Endothelial cell of umbilical vein (primary cell): ENCODE measurements at regions of chr19 and their contacts with region 1.

Region 1: GRCh38 chr19:12610540-12611360 is at the starts of genes ZNF490 and ZNF791:
- DNase-seq: peak; percentile 97
- H3K4me3 ChIP-seq: peak within 1 kb of the TSS; percentile 83 to 97 (median 91)
- H3K27ac ChIP-seq: peak within 1 kb of the TSS; percentile 91
- H3K4me1 ChIP-seq: peaks cover 13% of the 10 kb centered on the region
- H3K27me3 ChIP-seq: no peaks in the 10 kb centered on the region
- CTCF ChIP-seq: peak; percentile 6 to 22
- POLR2A ChIP-seq: peak; percentile 74
- total RNA-seq, gene ZNF490: 5.7 and 6.3 TPM in 2 replicates
- total RNA-seq, gene ZNF791: 19.9 and 21.8 TPM in 2 replicates

Region 2: DNA sequence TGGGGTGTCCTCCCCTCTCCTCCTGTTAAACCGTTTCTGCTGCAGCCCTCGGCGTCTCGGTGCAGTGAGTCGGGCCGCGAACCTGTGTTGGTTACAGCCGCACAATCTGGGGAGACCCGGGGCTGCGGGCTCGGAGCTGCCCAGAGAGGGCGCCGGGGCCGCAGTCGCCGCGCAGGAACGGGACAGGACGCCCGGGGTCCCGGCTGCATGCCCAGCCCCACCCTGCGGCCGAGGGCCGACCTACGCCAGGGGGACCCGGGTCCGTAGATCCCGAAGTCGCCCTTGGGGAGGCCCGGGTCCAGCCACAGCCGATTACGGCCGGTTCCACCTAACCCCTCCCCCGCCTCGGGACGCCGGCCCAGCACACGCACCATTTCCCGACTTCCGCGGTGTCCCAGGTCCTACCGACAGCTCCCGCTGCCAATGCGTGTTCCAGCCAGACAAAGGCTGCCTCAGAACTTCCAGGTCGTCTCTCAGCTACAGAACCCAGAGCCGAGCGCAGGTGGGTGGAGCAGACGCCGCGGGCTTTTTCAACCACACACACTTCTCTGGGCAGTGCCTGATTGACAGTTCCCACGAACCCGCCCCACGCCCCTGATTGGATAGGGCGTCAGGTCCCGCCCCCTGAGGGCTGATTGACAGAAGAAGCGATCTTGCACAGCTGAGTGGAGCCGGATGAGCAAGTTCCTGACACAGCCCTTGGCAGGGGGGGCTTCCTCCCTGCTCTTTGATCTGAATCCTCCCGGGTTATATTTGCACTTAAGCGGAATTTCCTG is 170.0 kb before region 1 on chr19 and contains the start of gene ZNF443:
- CTCF ChIA-PET with region 1: no interaction called
- POLR2A ChIA-PET with region 1: no interaction called
- dilution Hi-C with region 1: no loop called
- intact Hi-C with region 1: loop called (anchors 2 kb)
- DNase-seq: peak; percentile 99
- H3K4me3 ChIP-seq: peak within 1 kb of the TSS; percentile 51 to 93 (median 59)
- H3K27ac ChIP-seq: peak within 1 kb of the TSS; percentile 4
- H3K4me1 ChIP-seq: peaks cover 2% of the 10 kb centered on the region
- H3K27me3 ChIP-seq: no peaks in the 10 kb centered on the region
- CTCF ChIP-seq: peak in 1 of 2 donors; percentile 6
- POLR2A ChIP-seq: peak; percentile 29
- total RNA-seq, gene ZNF443: 3.2 and 3.4 TPM in 2 replicates

Region 3: GRCh38 chr19:12639901-12640613 is 29.3 kb after region 1 on chr19:
- CTCF ChIA-PET with region 1: interaction called, 13 read pairs
- POLR2A ChIA-PET with region 1: interaction called, 4 read pairs
- dilution Hi-C with region 1: no loop called
- intact Hi-C with region 1: no loop called
- DNase-seq: peak; percentile 69
- H3K4me3 ChIP-seq: no peak overlapping the region
- H3K27ac ChIP-seq: no peak overlapping the region
- H3K4me1 ChIP-seq: no peaks in the 10 kb centered on the region
- H3K27me3 ChIP-seq: no peaks in the 10 kb centered on the region
- CTCF ChIP-seq: peak; percentile 72 to 86
- POLR2A ChIP-seq: no peak

Region 4: GRCh38 chr19:12736995-12737834 is 126.5 kb after region 1 on chr19 and contains the start of gene GET3:
- CTCF ChIA-PET with region 1: no interaction called
- POLR2A ChIA-PET with region 1: no interaction called
- dilution Hi-C with region 1: no loop called
- intact Hi-C with region 1: loop called (anchors 10 kb)
- DNase-seq: peak; percentile 100
- H3K4me3 ChIP-seq: peak within 1 kb of the TSS; percentile 64 to 99 (median 69)
- H3K27ac ChIP-seq: peak within 1 kb of the TSS; percentile 87
- H3K4me1 ChIP-seq: peaks cover 22% of the 10 kb centered on the region
- H3K27me3 ChIP-seq: no peaks in the 10 kb centered on the region
- CTCF ChIP-seq: no peak
- POLR2A ChIP-seq: peak; percentile 89
- total RNA-seq, gene GET3: 74.8 and 77.0 TPM in 2 replicates